RWPE1 (cell line): ENCODE measurements at regions of chr12 and their contacts with region 1.

Region 1: DNA sequence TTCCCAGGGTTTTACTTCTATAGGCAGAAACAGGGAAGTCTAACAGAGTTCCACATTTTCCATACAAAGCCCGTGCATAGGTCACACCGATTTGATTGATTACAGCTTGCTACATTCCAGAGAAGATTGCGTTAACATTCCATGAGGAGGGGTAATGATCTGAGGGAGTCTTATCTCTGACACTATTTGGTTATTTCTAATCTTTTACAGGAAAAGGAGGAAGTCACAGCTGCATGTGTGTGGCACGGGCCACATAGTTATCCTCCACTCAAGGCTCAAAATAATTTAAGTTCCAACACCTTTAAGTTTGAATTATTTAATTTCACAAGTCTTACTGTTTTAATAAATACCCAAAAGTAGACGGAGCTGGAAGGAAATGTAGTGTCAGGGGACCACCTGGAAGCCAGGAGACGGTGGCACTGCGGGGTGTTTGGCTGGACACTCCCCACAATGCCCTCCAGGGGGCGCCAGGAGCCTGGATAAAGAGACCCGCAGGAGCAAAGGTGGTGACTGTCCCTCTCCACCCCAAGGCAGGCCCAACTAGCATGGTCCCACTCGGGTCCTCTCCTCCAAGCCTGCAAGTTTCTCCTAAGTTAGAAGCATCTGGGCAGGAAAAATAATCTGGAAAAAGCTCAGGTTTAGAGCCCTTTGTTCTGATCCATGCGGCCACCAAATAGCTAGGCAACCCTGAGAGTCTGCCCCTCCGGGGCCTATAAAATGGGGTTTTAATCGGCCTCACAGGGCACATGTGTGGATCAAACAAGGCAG is 20.2 kb downstream of the KRT8 start:
- DNase-seq: peak; percentile 69
- H3K27ac ChIP-seq: no peak overlapping the region
- CTCF ChIP-seq: peak; percentile 84

Region 2: DNA sequence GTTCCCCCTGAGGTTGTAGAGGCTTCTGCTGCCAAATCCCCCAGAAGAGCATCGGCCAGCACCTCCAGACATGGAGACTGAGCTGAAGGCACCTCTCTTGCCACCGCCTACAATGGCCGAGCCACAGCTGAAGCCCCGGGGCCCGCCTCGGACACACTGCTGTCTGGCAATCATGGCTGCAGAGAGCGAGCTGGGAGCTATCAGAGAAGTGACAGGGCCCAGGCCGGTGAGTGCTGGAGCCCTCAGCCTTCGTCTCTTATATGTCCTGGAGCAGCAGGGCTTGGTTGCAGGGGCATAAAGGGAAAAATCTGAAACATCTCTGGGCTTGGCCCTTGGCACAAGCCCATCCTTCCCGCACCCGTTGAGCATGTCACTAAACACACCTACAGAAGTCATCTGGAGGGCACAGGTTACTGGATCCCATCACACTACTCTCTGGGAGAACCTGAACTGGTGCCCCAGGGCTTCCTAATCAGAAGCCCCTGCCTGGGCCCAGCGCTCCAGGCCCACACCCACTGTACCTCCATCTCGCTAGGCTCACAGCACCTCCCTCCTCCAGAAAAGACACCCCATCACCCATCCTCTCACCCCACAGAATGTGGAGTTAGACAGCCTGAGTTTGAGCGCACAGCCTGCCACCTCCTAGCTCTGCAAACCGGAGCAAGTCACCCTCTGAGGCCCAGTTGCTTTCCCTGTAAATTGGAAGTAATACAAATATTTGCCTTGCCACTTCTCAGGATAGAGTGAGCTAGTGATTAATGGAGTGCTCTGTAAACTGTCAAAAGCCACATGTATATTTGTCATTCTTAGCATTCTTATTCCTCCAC is 70.6 kb before region 1 on chr12 and contains the start of gene KRT4:
- CTCF ChIA-PET with region 1: no interaction called
- POLR2A ChIA-PET with region 1: no interaction called
- DNase-seq: no peak
- H3K27ac ChIP-seq: no peak within 1 kb of the TSS
- CTCF ChIP-seq: no peak

Region 3: GRCh38 chr12:52895061-52895887 is 10.6 kb after region 1 on chr12:
- CTCF ChIA-PET with region 1: interaction called, 20 read pairs
- POLR2A ChIA-PET with region 1: no interaction called
- DNase-seq: no peak
- H3K27ac ChIP-seq: peak overlapping the region; percentile 73
- CTCF ChIP-seq: no peak

Region 4: DNA sequence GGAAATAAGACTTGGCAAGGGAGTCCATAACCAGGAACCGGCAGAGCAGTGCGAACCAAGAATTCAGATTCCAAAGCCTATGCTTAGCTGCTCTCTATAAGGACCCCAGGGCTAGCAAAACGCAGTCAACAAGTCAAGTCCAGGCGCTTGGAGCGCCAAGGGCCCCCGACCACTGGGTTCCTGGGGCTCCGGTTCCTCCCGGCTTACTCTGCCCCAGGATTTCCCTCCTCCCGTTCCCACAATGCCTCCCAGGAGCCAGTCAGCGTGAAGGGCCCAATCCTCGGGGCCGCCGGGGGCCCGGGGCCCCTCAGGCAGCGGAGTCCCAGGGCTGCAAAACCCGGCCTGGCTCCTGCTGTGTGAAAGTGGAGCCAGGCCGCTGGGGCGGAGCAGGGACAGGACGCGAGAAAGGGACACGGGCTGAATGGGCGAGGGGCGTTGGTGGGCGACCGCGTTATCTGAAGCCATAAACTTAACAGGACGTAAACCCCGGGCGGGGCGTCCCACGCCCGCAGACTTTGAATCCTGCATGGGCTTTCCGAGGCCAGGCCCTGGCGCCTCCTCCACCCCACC is 18.7 kb after region 1 on chr12:
- CTCF ChIA-PET with region 1: interaction called, 20 read pairs
- POLR2A ChIA-PET with region 1: no interaction called
- DNase-seq: no peak
- H3K27ac ChIP-seq: peak overlapping the region; percentile 96
- CTCF ChIP-seq: no peak

Region 5: GRCh38 chr12:52949413-52950331 is 65.0 kb after region 1 on chr12:
- CTCF ChIA-PET with region 1: interaction called, 10 read pairs
- POLR2A ChIA-PET with region 1: no interaction called
- DNase-seq: peak; percentile 95
- H3K27ac ChIP-seq: peak overlapping the region; percentile 92
- CTCF ChIP-seq: no peak

Region 6: GRCh38 chr12:52969828-52970569 is 85.3 kb after region 1 on chr12:
- CTCF ChIA-PET with region 1: interaction called, 16 read pairs
- POLR2A ChIA-PET with region 1: no interaction called
- DNase-seq: no peak
- H3K27ac ChIP-seq: peak overlapping the region; percentile 96
- CTCF ChIP-seq: no peak